ENCODE measurements at regions of chr4 and their contacts with region 1.

Region 1: DNA sequence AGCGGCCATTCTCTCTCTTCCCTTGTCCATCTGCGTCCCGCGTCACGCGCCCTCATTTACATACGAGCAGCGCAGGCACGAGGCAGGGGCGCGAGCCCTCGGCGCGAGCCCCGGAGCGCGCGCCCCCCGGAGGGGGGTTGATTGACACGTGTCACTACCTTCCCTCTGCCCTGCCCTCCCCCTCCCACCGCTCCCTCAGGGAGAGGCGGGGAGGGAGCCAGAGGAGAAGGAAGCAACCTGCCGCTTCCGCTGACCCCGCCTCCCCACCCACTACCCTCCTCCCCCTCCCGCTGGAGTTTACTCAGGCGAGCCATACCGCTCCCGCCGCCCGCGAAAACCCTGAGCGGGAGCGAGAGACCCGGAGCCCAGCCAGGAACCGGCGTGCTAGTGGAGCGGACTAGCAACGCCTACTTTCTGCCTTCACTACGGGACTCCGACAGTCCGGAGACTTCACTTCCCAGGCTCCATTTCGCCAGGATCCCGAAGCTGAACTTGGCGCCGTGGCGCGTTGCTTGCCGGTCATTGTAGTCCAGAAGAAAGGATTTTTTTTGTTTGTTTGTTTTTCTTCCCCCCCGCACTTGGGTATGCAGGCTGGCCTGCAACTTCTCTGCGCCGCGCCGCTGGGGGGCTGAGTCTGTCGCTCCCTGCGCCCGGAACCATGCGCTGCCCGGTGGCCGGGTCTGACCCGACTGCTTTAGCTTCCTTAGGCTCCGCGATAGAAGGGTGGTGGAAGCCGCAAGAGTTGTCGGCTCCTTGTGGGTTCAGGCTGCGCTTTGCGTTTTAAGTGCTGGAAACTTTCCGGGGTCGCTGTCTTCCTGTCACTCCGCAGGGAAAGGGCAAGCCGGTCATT is at the start of gene LCORL:
- DNase-seq: peak; percentile 96
- H3K4me3 Mint-ChIP-seq: peak within 1 kb of the TSS; percentile 95
- H3K27ac Mint-ChIP-seq: peak within 1 kb of the TSS; percentile 88
- H3K4me1 Mint-ChIP-seq: peaks cover 17% of the 10 kb centered on the region
- H3K27me3 Mint-ChIP-seq: peaks cover 61% of the 10 kb centered on the region
- total RNA-seq, gene LCORL: 8.7 and 9.3 TPM in 2 replicates

Region 2: DNA sequence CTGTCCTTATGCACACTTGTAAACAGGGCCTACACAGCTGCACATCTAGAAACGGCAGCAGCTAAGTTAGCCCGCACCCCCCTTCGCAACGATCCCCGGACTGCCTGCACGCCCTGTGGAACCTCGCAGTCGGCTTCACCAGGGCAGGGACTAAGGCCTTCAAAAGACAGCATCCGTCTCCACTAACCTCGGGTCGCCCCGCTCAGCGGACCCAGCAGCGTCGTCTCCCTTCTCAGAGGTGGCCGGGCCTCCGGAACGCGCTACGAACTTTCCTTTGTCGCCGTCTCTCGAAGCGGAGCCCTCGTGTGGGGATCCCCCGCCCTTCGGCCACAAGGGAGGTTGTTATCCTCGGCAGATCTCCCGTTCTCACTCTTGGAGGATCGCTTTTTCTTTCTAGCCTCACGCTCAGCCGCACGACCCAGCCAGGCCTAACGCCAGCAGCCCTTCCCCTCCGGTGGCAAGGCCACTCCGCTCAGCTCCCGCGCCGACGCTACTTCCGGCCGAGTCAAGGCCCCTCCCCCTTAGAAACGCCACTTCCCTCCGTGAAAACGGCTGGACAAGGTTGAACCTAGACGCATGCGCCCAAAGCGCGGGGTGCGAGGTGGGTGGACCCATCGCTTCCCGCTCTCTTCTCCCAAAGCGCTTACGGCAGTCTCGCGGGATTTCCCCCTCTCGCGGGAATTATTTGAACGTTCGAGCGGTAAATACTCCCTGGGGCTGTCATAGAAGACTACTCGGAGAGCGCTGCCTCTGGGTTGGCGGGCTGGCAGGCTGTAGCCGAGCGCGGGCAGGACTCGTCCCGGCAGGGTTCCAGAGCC is 211.5 kb before region 1 on chr4 and contains the starts of genes DCAF16 and NCAPG:
- intact Hi-C with region 1: loop called (anchors 1 kb)
- DNase-seq: peak; percentile 100
- H3K4me3 Mint-ChIP-seq: peak within 1 kb of the TSS; percentile 97
- H3K27ac Mint-ChIP-seq: peak within 1 kb of the TSS; percentile 99
- H3K4me1 Mint-ChIP-seq: peaks cover 49% of the 10 kb centered on the region
- H3K27me3 Mint-ChIP-seq: peaks cover 2% of the 10 kb centered on the region
- total RNA-seq, gene DCAF16: 47.1 and 51.4 TPM in 2 replicates
- total RNA-seq, gene NCAPG: 46.3 and 53.4 TPM in 2 replicates

Region 3: GRCh38 chr4:18057821-18058533 is 36.0 kb after region 1 on chr4:
- intact Hi-C with region 1: loop called (anchors 1 kb)
- DNase-seq: no peak
- H3K4me3 Mint-ChIP-seq: no peak overlapping the region
- H3K27ac Mint-ChIP-seq: no peak overlapping the region
- H3K4me1 Mint-ChIP-seq: peaks cover 17% of the 10 kb centered on the region
- H3K27me3 Mint-ChIP-seq: peaks cover 38% of the 10 kb centered on the region

Region 4: GRCh38 chr4:18069810-18070209 is 47.9 kb after region 1 on chr4:
- intact Hi-C with region 1: no loop called
- DNase-seq: no peak
- H3K4me3 Mint-ChIP-seq: no peak overlapping the region
- H3K27ac Mint-ChIP-seq: no peak overlapping the region
- H3K4me1 Mint-ChIP-seq: no peaks in the 10 kb centered on the region
- H3K27me3 Mint-ChIP-seq: peaks cover 29% of the 10 kb centered on the region

Measured in activated CD4-positive, alpha-beta T cell treated with anti-CD3 and anti-CD28 coated beads, Interleukin-2, amount 10 ng/mL, durations not matched to agents 24 days and 14 days (primary cell).